ENCODE measurements at regions of chrX and their contacts with region 1.

Region 1: DNA sequence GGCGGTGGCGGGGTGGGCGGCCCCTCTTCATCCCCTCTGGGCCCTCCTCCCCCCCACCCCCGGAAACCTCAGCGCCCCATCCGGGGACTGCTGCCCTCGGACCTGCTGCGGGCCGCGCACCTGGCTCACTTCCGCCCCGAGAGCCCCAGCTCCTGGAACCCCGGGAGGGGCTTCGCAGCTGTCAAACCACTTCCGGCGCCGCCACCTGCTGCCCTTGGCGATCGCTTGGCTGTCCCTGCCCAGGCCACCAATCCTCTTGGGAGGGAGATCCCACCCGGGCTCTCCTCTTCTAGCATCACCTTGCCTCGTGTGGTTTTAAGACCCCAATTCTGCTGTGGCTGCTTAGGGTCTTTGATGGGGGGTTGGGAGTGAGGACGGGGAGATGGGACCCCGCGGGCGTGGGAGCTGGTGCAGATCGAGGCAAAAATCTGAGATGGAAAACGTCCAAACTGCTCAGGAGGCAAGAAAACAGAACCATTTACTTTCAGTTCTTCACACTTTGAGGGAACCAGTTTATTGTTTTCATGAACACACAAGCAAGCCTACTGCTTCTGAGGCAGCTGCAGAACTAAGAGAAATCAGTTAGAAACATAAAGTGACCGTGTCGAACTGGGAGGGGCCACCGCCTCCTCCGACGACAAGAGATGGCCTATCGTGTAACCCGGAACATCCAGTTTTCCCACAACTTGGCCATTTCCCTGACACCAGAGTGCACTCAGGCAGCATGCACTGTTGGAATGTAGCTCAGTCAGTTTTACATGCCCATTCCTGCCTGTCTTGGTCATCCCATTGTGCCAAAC is 779 bp downstream of the MTMR1 start:
- DNase-seq: peak; percentile 86
- ATAC-seq: peak; percentile 25
- H3K4me3 Mint-ChIP-seq: peak overlapping the region; percentile 88
- H3K27ac Mint-ChIP-seq: peak overlapping the region; percentile 98
- H3K4me1 Mint-ChIP-seq: peaks cover 61% of the 10 kb centered on the region
- H3K27me3 Mint-ChIP-seq: no peaks in the 10 kb centered on the region

Region 2: GRCh38 chrX:149938427-149939270 is 755.3 kb before region 1 on chrX and contains the start of gene EOLA2:
- CTCF ChIA-PET with region 1: no interaction called
- POLR2A ChIA-PET with region 1: interaction called, 4 read pairs
- intact Hi-C with region 1: loop called in 1 of 2 experiments (anchors 5 kb)
- DNase-seq: peak; percentile 94
- ATAC-seq: peak; percentile 58
- H3K4me3 Mint-ChIP-seq: peak within 1 kb of the TSS; percentile 82
- H3K27ac Mint-ChIP-seq: peak within 1 kb of the TSS; percentile 98
- H3K4me1 Mint-ChIP-seq: peaks cover 3% of the 10 kb centered on the region
- H3K27me3 Mint-ChIP-seq: no peaks in the 10 kb centered on the region
- total RNA-seq, gene EOLA2: 11.5 to 27.7 TPM

Region 3: GRCh38 chrX:150568320-150569154 is 125.4 kb before region 1 on chrX and contains the start of gene MTM1:
- CTCF ChIA-PET with region 1: interaction called, 5 read pairs
- POLR2A ChIA-PET with region 1: no interaction called
- intact Hi-C with region 1: loop called in 1 of 2 experiments (anchors 1 kb)
- DNase-seq: peak; percentile 95
- ATAC-seq: peak; percentile 92
- H3K4me3 Mint-ChIP-seq: peak within 1 kb of the TSS; percentile 75
- H3K27ac Mint-ChIP-seq: peak within 1 kb of the TSS; percentile 85
- H3K4me1 Mint-ChIP-seq: peaks cover 34% of the 10 kb centered on the region
- H3K27me3 Mint-ChIP-seq: no peaks in the 10 kb centered on the region
- total RNA-seq, gene MTM1: 23.1 to 31.3 TPM

Region 4: DNA sequence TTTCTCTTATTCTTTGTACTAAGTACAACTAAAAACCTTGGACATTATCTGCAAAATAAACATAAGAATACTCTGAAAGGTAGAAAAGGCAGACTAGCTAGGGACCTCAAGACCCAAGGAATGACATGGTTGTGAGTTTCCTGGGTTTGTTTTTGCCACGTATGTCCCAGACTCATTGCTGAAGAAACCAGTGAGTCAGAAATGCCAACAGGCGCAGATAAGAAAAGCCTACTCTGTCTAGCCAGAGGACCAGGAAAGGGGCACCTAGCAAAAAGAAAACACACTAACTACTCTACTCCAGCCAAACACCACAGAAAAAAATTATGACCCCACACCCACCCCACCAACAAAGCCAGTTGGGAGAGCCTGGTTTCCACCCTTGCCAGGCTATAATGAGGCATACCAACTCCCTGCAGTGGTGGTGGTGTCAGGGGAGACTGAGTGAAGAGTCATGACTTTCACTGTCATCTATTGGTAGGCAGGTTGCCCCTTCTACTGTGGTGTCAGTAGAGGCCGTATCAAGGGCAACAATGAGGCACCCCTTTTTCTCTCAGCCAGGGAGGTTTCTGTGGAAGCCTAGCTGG is 10.1 kb after region 1 on chrX:
- CTCF ChIA-PET with region 1: interaction called, 8 read pairs
- POLR2A ChIA-PET with region 1: interaction called, 4 read pairs
- intact Hi-C with region 1: loop called in 1 of 2 experiments (anchors 1 kb)
- DNase-seq: peak; percentile 52
- ATAC-seq: peak; percentile 91
- H3K4me3 Mint-ChIP-seq: peak overlapping the region; percentile 21
- H3K27ac Mint-ChIP-seq: peak overlapping the region; percentile 88
- H3K4me1 Mint-ChIP-seq: peaks cover 49% of the 10 kb centered on the region
- H3K27me3 Mint-ChIP-seq: no peaks in the 10 kb centered on the region

Region 5: DNA sequence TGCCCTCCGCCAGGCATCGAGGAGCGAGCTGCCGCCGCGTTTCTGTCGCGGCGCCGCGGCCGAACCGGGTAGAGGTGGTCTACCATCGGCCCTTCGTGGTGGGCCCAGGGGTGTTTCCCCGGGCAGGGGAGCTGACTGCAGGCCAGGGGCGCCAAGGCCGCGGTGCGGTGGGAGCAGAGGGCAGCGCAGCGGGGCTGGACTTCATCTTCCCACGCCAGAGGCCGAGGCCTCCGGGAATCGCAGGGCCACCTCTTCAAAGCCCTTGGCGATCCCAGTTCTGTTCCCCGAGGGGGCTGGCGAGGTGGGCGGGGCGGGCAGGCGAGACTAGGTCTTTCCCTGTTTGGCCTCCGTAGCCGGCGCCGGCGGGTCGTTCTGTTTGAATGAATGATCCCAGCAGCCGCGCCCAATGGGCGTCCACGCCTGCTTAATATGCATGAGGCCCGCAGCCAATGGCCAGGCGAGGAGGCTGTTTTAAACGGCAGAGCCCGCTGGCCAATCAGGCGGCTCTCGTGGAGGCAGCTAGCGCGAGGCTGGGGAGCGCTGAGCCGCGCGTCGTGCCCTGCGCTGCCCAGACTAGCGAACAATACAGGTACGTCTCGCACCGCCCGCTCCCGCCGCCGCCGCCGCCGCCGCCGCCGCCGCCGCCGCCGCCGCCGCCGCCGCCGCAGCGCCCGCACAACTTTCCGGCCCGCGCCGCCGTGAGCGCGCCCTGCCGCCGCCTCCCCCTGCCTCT is 289.0 kb after region 1 on chrX and contains the start of gene HMGB3:
- CTCF ChIA-PET with region 1: no interaction called
- POLR2A ChIA-PET with region 1: no interaction called
- intact Hi-C with region 1: loop called in 1 of 2 experiments (anchors 10 kb)
- DNase-seq: peak; percentile 91
- ATAC-seq: peak; percentile 99
- H3K4me3 Mint-ChIP-seq: peak within 1 kb of the TSS; percentile 66
- H3K27ac Mint-ChIP-seq: no peak within 1 kb of the TSS
- H3K4me1 Mint-ChIP-seq: peaks cover 4% of the 10 kb centered on the region
- H3K27me3 Mint-ChIP-seq: peaks cover 16% of the 10 kb centered on the region
- total RNA-seq, gene HMGB3: 26.5 to 29.3 TPM